ENCODE measurements at regions of chr1 and their contacts with region 1.

Region 1: DNA sequence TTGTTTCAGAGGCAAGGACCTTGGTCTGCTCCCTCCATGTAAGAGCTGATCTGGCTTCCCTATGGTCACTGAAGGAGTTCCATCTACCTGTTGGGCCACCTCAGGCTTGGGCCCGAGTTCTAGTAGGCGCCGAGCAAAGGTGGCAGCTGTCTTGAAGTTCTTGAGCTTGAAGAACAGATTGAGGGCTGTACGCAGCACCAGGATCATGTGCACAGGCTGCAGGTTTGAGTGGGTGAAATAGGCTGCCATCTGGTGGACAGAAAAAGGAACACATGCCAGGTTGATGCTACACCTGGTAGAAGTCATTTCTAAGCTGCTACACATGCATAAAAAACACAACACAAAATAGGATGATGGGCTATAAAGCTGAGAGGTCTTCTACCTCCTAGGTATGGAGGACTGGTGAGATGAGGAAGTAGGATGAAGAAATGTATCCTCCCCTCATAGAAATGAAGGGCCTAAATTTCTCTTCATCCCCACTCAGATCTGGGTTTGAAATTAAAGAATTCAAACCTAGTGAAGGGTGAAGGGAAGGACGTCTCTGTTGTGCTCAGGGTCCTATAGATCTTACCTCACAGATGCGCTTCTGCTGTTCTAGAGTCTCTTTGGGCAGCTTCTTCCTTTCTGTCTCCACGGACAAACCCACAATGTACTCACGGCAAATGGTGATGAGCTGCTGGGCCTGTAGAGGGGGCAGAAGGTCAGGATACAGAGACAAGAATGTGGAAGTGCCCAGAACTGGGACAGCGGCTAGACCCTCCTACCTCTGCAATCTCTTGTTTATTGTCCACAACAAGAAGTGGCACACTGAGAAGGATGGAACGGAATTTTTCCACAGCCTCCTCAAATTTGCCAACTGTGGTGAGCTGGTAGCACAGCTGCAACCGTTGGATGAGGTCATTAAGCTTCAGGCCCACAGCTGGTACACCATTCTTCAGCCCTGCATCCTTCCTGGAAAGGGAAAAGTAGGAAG is 6.6 kb upstream of the PEX19 start:
- DNase-seq: peak; percentile 78
- ATAC-seq: peak; percentile 93
- H3K4me3 Mint-ChIP-seq: no peak overlapping the region
- H3K27ac Mint-ChIP-seq: peak overlapping the region; percentile 10
- H3K4me1 Mint-ChIP-seq: no peaks in the 10 kb centered on the region
- H3K27me3 Mint-ChIP-seq: no peaks in the 10 kb centered on the region

Region 2: GRCh38 chr1:159600894-159601293 is 690.6 kb before region 1 on chr1:
- CTCF ChIA-PET with region 1: no interaction called
- DNase-seq: no peak
- ATAC-seq: no peak
- H3K4me3 Mint-ChIP-seq: no peak overlapping the region
- H3K27ac Mint-ChIP-seq: no peak overlapping the region
- H3K4me1 Mint-ChIP-seq: no peaks in the 10 kb centered on the region
- H3K27me3 Mint-ChIP-seq: no peaks in the 10 kb centered on the region

Region 3: DNA sequence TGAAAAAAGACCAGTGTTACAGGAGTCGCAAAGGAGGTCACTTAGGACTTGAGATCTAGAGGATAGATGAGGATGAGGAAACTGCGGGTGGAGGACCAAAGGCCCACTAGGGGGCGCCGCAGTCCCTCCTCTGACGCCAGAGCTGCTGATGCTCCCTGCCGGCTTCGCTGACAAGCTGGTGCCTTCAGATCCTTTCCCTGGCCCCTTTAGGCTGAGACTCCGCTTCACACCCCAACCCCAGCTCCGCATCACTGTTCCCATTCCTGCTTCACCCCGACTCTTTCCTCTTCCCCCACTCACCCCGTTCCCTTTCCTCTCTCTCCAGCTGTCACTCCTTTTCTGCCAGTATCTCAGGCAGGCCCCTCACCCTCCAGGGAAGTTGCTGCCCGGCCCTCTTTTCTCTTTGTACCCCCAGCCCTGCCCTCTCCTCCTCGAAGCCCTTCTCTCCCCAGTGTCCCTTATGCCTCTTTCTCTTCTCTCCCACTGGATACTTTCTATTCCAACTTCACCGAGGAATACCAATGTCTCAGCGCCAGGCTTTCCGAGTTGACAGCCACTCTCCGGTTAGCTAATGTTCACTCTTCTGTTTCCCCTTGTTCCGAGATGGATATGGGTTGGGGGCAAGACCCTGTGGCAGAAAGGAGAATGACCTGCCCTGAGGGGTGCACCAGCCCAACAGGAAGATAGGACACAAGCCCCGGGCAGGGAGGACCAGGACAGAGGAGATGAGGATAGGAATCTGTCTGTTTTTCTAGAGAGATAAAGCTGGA is 205.7 kb before region 1 on chr1:
- CTCF ChIA-PET with region 1: interaction called, 11 read pairs
- DNase-seq: peak; percentile 83
- ATAC-seq: peak; percentile 61
- H3K4me3 Mint-ChIP-seq: no peak overlapping the region
- H3K27ac Mint-ChIP-seq: no peak overlapping the region
- H3K4me1 Mint-ChIP-seq: peaks cover 7% of the 10 kb centered on the region
- H3K27me3 Mint-ChIP-seq: peaks cover 24% of the 10 kb centered on the region

Region 4: DNA sequence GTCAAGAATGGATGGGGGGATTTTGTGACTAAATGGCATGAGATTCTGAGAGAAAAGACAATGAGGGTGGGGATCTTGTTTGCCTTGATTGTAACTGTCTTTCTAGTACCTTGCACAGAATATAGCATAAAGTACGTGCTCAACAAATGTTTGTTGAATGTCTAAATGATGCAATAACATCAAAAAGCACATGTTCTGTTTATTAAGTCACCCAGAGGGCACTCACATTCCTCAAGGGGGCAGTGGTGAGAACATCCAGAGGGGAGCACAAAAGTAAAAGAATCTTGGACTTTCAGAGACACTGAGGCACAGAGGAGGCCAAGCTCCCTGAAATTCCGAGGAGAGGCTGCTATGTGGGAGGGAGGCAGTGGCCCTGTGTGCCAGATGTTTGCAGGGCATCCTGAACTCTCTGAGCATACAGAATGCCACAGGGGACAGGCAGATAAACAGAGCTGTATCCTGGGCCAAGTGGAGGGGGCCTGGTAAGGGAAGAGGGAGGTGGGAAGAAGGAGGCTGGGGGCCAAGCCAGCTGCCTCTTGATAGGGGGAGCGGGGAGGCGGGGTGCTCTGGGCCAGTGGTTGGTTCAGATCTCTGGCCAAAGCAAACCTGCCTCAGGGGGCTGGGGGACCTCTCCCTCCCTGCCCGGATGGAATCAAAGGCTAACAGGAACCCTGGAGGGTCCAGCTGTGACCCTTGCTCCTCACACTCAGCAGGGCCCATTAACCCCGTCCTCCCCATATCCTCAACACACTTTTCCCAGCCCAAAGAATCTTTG is 182.5 kb before region 1 on chr1:
- CTCF ChIA-PET with region 1: interaction called, 66 read pairs
- DNase-seq: peak; percentile 63
- ATAC-seq: peak; percentile 42
- H3K4me3 Mint-ChIP-seq: no peak overlapping the region
- H3K27ac Mint-ChIP-seq: peak overlapping the region; percentile 20
- H3K4me1 Mint-ChIP-seq: peaks cover 3% of the 10 kb centered on the region
- H3K27me3 Mint-ChIP-seq: no peaks in the 10 kb centered on the region

Region 5: DNA sequence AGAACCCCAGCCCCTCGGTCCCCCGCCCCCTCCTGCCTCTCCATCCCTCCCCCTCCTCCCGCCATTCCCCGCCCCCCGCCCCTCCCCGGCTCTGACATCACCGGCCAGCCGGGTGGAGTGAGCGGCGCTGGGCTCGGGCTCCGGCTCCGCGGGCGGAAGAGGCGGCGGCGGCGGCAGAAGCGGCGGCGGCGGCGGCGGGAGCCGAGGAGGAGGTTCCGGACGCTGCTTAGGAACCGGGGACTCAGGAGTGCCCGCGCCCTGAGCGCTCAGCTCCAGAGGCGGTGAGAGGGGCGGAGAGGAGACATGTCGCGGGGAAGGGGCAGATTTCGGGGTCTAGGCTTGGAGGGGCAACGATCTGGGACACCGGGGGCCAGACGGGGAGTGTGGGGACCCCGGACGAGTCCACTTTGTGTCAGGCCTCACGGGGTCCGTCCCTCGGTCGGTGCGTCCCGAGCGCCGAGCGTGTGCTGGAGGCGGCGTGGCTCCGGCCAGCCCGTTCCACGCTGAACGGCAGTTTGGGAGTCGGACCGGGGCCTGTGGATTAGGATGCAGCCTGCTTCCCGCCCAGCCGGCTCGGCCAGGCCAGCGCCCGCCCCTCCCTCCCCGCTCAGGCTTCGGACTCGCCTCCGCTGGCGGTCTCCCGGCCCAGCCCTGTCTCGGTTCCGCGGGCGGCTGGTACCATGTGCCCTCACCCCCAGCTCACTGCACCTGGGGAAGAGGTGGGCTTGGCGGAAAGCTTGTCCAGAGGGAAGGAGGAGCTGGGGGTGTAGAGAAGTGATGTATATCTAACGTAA is 86.1 kb before region 1 on chr1 and contains the start of gene PEA15:
- CTCF ChIA-PET with region 1: interaction called, 47 read pairs
- DNase-seq: peak; percentile 73
- ATAC-seq: peak; percentile 87
- H3K4me3 Mint-ChIP-seq: peak within 1 kb of the TSS; percentile 77
- H3K27ac Mint-ChIP-seq: peak within 1 kb of the TSS; percentile 82
- H3K4me1 Mint-ChIP-seq: peaks cover 35% of the 10 kb centered on the region
- H3K27me3 Mint-ChIP-seq: no peaks in the 10 kb centered on the region
- total RNA-seq, gene PEA15: 36.0 to 43.2 TPM

Region 6: DNA sequence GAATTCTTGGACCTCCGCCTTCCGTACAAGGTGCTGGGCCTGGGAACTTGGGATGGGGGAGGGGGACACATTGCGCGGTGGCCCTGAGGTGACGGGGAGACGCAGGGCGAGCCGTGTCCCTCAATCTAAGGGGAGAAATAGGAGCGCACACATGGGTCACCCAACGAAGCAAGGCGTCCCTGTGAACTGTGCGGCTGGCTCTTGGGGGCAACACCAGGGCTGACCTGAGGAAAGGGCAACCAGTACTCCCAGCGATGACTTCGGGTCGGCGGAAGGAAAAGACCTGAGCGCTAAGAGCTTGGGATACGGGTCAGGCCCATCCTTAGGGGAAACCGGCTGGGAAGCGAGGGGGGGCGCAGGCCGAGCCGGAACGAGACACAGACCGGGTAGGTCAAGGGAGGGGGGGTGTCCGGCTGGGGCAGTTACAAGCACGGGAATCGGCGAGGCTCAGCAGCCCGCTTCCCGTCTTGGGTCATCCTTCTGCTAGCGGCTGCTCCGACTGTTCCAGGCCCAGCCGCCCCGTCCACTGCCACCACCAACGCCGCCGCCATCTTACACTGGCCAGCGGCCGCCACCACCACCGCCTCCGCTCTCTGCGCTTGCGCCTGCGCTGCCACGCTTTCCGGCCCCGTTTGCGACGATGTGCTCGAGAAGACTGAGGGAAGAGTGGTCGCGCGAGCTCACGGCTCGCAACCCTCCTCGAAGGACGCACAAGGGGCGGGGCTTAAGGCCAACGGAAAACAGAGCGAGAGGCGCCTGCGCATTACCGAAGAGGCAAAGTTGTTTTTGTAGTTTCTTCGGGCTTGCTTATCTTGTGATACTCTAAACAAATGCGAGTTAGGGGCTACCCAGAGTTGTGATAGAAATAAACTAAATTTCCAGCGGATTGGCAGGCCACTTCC is 29.4 kb before region 1 on chr1 and contains the start of gene DCAF8:
- CTCF ChIA-PET with region 1: interaction called, 50 read pairs
- DNase-seq: peak; percentile 99
- ATAC-seq: peak; percentile 91
- H3K4me3 Mint-ChIP-seq: peak within 1 kb of the TSS; percentile 91
- H3K27ac Mint-ChIP-seq: peak within 1 kb of the TSS; percentile 95
- H3K4me1 Mint-ChIP-seq: peaks cover 45% of the 10 kb centered on the region
- H3K27me3 Mint-ChIP-seq: no peaks in the 10 kb centered on the region
- total RNA-seq, gene DCAF8: 115 to 117 TPM

Region 7: DNA sequence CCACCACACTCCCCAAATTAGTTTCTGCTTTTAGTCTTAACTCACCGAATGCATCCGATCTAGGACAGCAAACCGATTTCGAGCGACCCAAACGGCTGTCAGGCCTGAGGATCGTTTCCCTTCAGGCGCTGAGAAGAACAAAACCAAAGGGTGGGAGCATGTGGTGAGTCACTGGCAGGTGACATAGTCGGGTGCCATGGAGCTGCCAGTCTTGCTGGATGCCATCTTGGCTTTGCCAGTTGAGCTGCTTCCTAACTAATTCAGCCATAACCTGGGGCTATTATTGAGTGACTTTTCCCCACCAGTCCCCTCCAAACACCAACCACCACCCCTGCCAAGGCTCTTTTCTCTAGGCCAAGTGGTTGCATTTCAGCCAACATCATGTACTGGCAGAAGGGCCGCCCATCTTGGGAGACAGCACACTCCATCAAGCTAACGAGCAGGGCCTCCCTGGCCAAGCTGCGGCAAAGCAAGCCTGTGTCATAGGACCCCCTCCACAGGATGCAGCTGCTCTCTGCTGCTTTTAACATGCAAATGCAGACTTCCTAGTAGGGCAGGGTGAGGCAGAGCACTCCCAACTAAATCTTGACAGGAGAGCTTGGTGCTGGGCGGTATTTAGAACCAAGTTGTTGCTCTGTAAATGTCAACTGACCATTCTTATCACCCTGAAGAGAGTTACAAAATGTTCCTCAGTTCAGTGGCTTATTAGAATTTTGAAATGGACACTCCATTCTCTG is 15.8 kb after region 1 on chr1:
- CTCF ChIA-PET with region 1: interaction called, 22 read pairs
- DNase-seq: no peak
- ATAC-seq: no peak
- H3K4me3 Mint-ChIP-seq: no peak overlapping the region
- H3K27ac Mint-ChIP-seq: no peak overlapping the region
- H3K4me1 Mint-ChIP-seq: no peaks in the 10 kb centered on the region
- H3K27me3 Mint-ChIP-seq: no peaks in the 10 kb centered on the region

Region 8: GRCh38 chr1:160376525-160377131 is 85.1 kb after region 1 on chr1:
- CTCF ChIA-PET with region 1: interaction called, 43 read pairs
- DNase-seq: peak; percentile 57
- ATAC-seq: peak; percentile 84
- H3K4me3 Mint-ChIP-seq: no peak overlapping the region
- H3K27ac Mint-ChIP-seq: no peak overlapping the region
- H3K4me1 Mint-ChIP-seq: peaks cover 13% of the 10 kb centered on the region
- H3K27me3 Mint-ChIP-seq: peaks cover 4% of the 10 kb centered on the region